Esophagus squamous epithelium (tissue), 5 donors: ENCODE measurements at regions of chr1 and their contacts with region 1.

Region 1: GRCh38 chr1:160726498-160727315 is 12.3 kb upstream of the SLAMF7 start:
- DNase-seq: no peak
- H3K4me3 ChIP-seq: no peak overlapping the region
- H3K27ac ChIP-seq: peak overlapping the region; percentile 61 to 82 (median 70)
- H3K4me1 ChIP-seq: peaks cover 17 to 62% (median 25%) of the 10 kb centered on the region in 3 donors
- H3K27me3 ChIP-seq: no peaks in the 10 kb centered on the region
- CTCF ChIP-seq: peak; percentile 80 to 95 (median 87)
- POLR2A ChIP-seq: no peak

Region 2: DNA sequence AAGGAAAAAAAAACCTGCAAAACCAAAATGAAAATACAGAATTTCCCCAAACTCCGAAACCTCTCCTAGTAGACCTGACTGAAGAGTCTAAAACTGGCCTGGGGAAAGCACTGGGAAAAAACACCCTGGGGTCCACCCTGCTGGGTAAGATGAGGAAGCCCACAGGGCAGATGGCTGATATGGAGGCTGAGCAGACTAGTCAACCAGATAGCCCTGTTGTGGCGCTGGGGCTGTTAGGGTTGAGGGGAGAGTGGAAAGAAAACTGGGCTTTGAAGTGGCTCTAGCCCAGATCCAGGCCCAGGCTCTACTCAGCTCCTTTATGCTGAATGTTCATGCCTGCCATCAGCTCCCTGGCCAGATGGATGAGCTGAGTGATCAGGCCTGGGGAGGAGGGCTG is 73.1 kb before region 1 on chr1:
- intact Hi-C with region 1: no loop called
- DNase-seq: no peak
- H3K4me3 ChIP-seq: no peak overlapping the region
- H3K27ac ChIP-seq: no peak overlapping the region
- H3K4me1 ChIP-seq: peaks cover 0 to 5% (median 0%) of the 10 kb centered on the region in 3 donors
- H3K27me3 ChIP-seq: no peaks in the 10 kb centered on the region
- CTCF ChIP-seq: no peak
- POLR2A ChIP-seq: no peak

Region 3: GRCh38 chr1:160768295-160768657 is 41.6 kb after region 1 on chr1:
- intact Hi-C with region 1: loop called (anchors 5 kb)
- DNase-seq: no peak
- H3K4me3 ChIP-seq: peak overlapping the region in 3 of 4 donors; percentile 23 to 48 (median 29)
- H3K27ac ChIP-seq: peak overlapping the region; percentile 70 to 93 (median 86)
- H3K4me1 ChIP-seq: peaks cover 5 to 32% (median 21%) of the 10 kb centered on the region in 3 donors
- H3K27me3 ChIP-seq: no peaks in the 10 kb centered on the region
- CTCF ChIP-seq: peak; percentile 39 to 92 (median 66)
- POLR2A ChIP-seq: no peak